Activated naive CD4-positive, alpha-beta T cell treated with anti-CD3 and anti-CD28 coated beads for 36 hours (primary cell): ENCODE measurements at regions of chr11 and their contacts with region 1.

Region 1: DNA sequence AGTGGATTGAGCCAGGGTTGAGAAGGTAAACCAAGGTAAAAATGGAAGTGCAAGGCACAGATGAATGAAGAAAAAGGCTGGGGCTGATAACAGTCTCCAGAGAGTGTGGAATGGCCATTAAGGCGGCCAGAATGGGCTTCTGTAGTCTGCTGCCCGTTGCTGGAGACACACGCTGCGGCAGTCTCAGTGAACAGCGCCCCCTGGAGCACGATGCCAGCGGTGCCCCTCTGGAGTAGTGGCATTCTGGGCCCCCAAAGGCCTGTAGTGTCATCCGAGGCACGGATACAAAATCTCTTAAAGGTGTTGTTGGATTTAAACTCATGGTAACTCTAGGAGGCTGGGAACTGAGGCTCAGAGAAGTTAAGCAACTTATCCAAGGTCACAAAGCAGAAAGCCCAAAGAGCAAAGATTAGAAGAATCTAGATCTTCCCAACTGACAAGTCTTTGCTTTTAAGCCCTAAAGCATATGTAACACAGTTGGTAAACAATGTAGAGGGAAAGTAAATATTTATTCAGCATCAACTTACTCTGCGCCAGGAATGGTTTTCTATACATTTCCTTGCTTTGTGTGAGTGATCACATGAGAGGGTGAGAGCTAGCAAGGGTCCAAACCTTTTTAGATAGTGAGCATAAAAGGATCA is 18.2 kb downstream of the KCNJ1 start:
- DNase-seq: peak; percentile 80
- H3K4me3 Mint-ChIP-seq: no peak overlapping the region
- H3K27ac Mint-ChIP-seq: no peak overlapping the region
- H3K4me1 Mint-ChIP-seq: peaks cover 13% of the 10 kb centered on the region
- H3K27me3 Mint-ChIP-seq: no peaks in the 10 kb centered on the region

Region 2: GRCh38 chr11:128172046-128172878 is 676.7 kb before region 1 on chr11:
- CTCF ChIA-PET with region 1: interaction called, 11 read pairs
- intact Hi-C with region 1: loop called (anchors 1 kb)
- DNase-seq: peak; percentile 96
- H3K4me3 Mint-ChIP-seq: no peak overlapping the region
- H3K27ac Mint-ChIP-seq: no peak overlapping the region
- H3K4me1 Mint-ChIP-seq: peaks cover 7% of the 10 kb centered on the region
- H3K27me3 Mint-ChIP-seq: no peaks in the 10 kb centered on the region

Region 3: DNA sequence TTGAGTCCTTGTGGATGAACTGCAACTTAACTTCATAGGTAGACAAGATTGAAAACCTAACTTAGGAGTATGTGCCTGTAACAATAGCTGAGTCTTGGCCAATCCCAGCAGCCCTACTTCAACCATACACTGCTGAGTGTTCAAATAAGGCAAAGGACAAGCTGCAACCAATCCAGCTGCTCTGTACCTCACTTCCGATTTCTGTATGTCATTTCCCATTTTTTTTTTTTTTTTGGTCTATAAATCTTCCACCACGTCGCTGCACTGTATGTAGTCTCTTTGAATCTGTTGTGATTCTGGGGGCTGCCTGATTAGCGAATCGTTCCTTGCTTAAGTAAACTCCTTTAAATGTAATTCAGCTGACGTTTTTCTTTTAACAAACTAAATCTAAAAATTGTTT is 190.4 kb before region 1 on chr11:
- CTCF ChIA-PET with region 1: no interaction called
- intact Hi-C with region 1: no loop called
- DNase-seq: no peak
- H3K4me3 Mint-ChIP-seq: no peak overlapping the region
- H3K27ac Mint-ChIP-seq: no peak overlapping the region
- H3K4me1 Mint-ChIP-seq: peaks cover 6% of the 10 kb centered on the region
- H3K27me3 Mint-ChIP-seq: peaks cover 2% of the 10 kb centered on the region

Region 4: GRCh38 chr11:129100193-129100592 is 251.3 kb after region 1 on chr11:
- CTCF ChIA-PET with region 1: no interaction called
- intact Hi-C with region 1: no loop called
- DNase-seq: no peak
- H3K4me3 Mint-ChIP-seq: no peak overlapping the region
- H3K27ac Mint-ChIP-seq: no peak overlapping the region
- H3K4me1 Mint-ChIP-seq: no peaks in the 10 kb centered on the region
- H3K27me3 Mint-ChIP-seq: no peaks in the 10 kb centered on the region